ENCODE measurements at regions of chr10 and their contacts with region 1.

Region 1: GRCh38 chr10:95247881-95248583 is 42.8 kb downstream of the PDLIM1 start:
- DNase-seq: peak in 1 of 2 donors; percentile 17
- H3K4me3 ChIP-seq: no peak overlapping the region
- CTCF ChIP-seq: no peak
- POLR2A ChIP-seq: no peak

Region 2: GRCh38 chr10:95168694-95169093 is 79.3 kb before region 1 on chr10:
- intact Hi-C with region 1: no loop called
- DNase-seq: no peak
- H3K4me3 ChIP-seq: no peak overlapping the region
- CTCF ChIP-seq: no peak
- POLR2A ChIP-seq: no peak

Region 3: GRCh38 chr10:95363303-95363912 is 115.4 kb after region 1 on chr10:
- intact Hi-C with region 1: loop called (anchors 2 kb)
- DNase-seq: peak in 1 of 2 donors; percentile 46
- H3K4me3 ChIP-seq: no peak overlapping the region
- CTCF ChIP-seq: no peak
- POLR2A ChIP-seq: no peak